Activated naive CD4-positive, alpha-beta T cell treated with anti-CD3 and anti-CD28 coated beads for 36 hours (primary cell): ENCODE measurements at regions of chr13 and their contacts with region 1.

Region 1: GRCh38 chr13:43878892-43879754 is at the start of gene CCDC122:
- DNase-seq: peak; percentile 86
- H3K4me3 Mint-ChIP-seq: peak within 1 kb of the TSS; percentile 88
- H3K27ac Mint-ChIP-seq: peak within 1 kb of the TSS; percentile 83
- H3K4me1 Mint-ChIP-seq: peaks cover 23% of the 10 kb centered on the region
- H3K27me3 Mint-ChIP-seq: peaks cover 12% of the 10 kb centered on the region
- total RNA-seq, gene CCDC122: 2.1 to 2.2 TPM

Region 2: GRCh38 chr13:42594970-42595571 is 1284.1 kb before region 1 on chr13:
- CTCF ChIA-PET with region 1: no interaction called
- intact Hi-C with region 1: loop called (anchors 1 kb)
- DNase-seq: peak; percentile 73
- H3K4me3 Mint-ChIP-seq: no peak overlapping the region
- H3K27ac Mint-ChIP-seq: no peak overlapping the region
- H3K4me1 Mint-ChIP-seq: no peaks in the 10 kb centered on the region
- H3K27me3 Mint-ChIP-seq: no peaks in the 10 kb centered on the region

Region 3: DNA sequence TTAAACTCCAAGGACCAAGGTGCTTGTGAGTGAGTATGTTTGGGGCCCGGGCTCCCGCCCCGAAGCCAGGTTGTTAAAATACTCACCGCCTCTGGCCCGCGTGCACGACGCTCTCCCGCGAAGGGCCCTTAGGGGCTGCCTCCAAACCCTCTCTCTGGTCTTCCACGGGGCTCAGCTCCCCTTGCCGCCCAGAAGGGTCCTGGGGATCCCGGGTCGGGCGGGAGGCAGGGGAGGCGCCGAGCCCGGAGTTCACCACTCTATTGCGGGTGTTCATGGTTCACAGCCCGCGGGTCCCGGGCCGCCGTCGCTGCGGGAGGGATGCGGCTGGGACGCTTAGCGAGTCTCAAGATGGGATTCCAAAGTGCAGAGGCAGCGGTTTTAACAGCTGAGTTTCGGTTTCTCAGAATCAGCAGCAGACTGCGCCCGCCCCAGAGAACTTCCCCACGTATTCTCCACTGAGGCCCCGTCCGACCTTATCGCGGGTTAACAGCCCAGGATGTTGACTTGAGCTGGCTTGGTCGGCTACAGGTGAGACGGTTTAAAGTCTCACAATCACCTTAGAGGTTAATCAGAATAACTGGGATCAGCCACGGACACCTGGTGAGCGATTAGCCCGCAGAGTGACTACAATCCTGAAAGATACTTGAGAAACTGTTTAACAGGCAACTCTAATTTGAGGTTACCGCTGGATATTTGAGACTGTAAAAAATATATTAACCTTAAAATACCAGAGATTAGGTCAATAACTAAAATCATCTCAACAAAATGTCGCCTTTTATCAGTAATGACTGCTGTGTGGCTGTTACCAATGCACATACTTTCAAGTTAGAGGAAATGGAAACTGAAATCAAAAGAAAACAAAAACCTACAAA is 887.0 kb before region 1 on chr13 and contains the start of gene EPSTI1:
- CTCF ChIA-PET with region 1: no interaction called
- intact Hi-C with region 1: loop called (anchors 5 kb)
- DNase-seq: peak; percentile 84
- H3K4me3 Mint-ChIP-seq: peak within 1 kb of the TSS; percentile 87
- H3K27ac Mint-ChIP-seq: peak within 1 kb of the TSS; percentile 98
- H3K4me1 Mint-ChIP-seq: peaks cover 52% of the 10 kb centered on the region
- H3K27me3 Mint-ChIP-seq: no peaks in the 10 kb centered on the region
- total RNA-seq, gene EPSTI1: 17.4 to 19.8 TPM

Region 4: GRCh38 chr13:43303033-43303729 is 575.9 kb before region 1 on chr13:
- CTCF ChIA-PET with region 1: no interaction called
- intact Hi-C with region 1: loop called (anchors 2 kb)
- DNase-seq: peak; percentile 41
- H3K4me3 Mint-ChIP-seq: no peak overlapping the region
- H3K27ac Mint-ChIP-seq: no peak overlapping the region
- H3K4me1 Mint-ChIP-seq: no peaks in the 10 kb centered on the region
- H3K27me3 Mint-ChIP-seq: peaks cover 2% of the 10 kb centered on the region

Region 5: DNA sequence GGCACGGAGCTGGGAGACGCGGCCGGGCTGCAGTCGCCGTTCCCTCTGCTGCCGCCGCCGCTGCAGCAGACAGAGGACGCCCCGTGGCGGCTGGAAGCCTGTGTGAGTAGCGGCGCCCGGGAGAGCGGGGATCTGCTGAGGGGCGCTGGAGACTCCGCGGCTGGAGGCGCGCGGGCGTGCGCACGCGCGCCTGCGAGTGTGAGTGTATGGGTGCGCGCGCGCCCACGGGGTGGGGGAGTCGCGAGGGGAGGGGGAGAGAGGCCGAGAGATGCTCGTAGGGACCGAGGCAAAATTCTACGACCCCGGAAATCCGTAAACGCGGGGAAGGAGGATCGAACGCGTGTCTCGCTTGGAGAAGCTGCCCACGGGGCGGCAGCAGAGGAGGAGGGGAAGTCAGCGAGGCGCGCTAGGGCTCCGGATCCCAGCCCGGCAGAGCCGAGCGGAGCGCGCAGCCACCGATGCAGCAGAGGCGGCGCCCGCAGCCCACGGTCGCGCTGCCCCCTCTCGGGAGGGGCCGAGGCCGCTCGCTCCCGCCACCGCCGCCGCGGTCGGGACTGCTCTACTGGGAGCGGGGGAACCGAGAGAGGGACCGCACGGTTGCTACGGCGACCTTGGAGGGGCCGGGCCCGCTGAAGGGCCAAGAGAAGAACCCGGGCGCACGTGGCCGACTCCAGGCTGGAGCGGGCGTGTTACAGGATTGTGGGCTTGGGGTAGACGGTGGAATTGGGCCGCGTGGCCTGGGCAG is 92.2 kb before region 1 on chr13 and contains the start of gene ENOX1:
- CTCF ChIA-PET with region 1: no interaction called
- intact Hi-C with region 1: loop called (anchors 2 kb)
- DNase-seq: peak; percentile 50
- H3K4me3 Mint-ChIP-seq: peak within 1 kb of the TSS; percentile 76
- H3K27ac Mint-ChIP-seq: no peak within 1 kb of the TSS
- H3K4me1 Mint-ChIP-seq: peaks cover 9% of the 10 kb centered on the region
- H3K27me3 Mint-ChIP-seq: peaks cover 45% of the 10 kb centered on the region
- total RNA-seq, gene ENOX1: 0.35 to 0.64 TPM

Region 6: GRCh38 chr13:44141725-44142539 is 262.8 kb after region 1 on chr13:
- CTCF ChIA-PET with region 1: no interaction called
- intact Hi-C with region 1: loop called (anchors 1 kb)
- DNase-seq: peak; percentile 95
- H3K4me3 Mint-ChIP-seq: peak overlapping the region; percentile 89
- H3K27ac Mint-ChIP-seq: peak overlapping the region; percentile 86
- H3K4me1 Mint-ChIP-seq: peaks cover 14% of the 10 kb centered on the region
- H3K27me3 Mint-ChIP-seq: no peaks in the 10 kb centered on the region